Esophagus muscularis mucosa (tissue), 4 donors: ENCODE measurements at regions of chr16 and their contacts with region 1.

Region 1: DNA sequence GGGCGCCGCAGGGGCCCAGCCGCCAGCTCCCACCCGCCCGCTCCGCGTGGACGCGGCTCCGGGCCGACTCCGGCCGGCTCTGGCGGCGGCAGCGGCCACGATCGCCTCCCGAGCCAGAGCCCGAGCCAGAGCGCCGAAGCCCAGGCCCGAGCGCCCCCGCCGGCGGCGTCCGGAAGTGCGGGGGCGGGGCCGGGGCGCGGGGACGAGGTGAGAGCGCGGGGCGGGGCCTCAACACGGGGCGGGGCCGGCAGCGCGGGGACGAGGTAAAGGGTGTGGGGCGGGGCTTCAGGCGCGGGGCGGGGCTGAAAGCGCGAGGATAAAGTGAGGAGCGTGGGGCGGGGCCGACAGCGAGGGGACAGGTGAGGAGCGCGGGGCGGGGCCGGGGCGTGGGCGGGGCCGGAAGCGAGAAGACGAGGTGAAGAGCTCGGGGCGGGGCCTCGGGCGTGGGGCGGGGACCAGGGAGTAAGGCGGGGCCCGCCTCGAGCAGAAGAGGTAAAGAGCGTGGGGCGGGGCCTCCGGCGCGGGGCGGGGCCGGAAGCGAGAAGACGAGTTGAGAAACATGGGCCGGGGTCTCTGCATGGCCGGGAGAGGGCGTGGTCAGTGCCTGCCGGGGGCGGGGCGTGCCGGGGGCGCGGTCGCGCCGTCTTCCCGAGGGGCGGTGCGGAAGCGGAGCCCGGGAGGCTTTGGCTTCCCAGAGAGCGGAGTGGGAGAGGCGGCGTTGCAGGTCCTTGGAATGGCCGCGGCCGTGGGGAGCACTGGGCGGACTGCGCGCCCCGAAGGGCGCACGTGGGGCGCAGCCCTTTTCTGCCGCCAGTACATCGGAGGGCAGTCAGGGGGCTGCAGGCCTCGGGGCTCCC is at the start of gene AXIN1:
- DNase-seq: peak; percentile 100
- H3K4me3 ChIP-seq: peak within 1 kb of the TSS; percentile 78 to 94 (median 80)
- H3K27ac ChIP-seq: peak within 1 kb of the TSS; percentile 71 to 86 (median 81)
- H3K4me1 ChIP-seq: peaks cover 8 to 34% (median 27%) of the 10 kb centered on the region in 4 donors
- H3K27me3 ChIP-seq: no peaks in the 10 kb centered on the region
- CTCF ChIP-seq: peak; percentile 46 to 79 (median 63)
- EP300 ChIP-seq: no peak
- POLR2A ChIP-seq: no peak
- total RNA-seq, gene AXIN1: 24.1 to 56.2 (median 44.1) TPM

Region 2: GRCh38 chr16:228818-229730 is 123.7 kb before region 1 on chr16 and contains the start of gene LUC7L:
- intact Hi-C with region 1: loop called (anchors 5 kb)
- DNase-seq: peak; percentile 94
- H3K4me3 ChIP-seq: peak within 1 kb of the TSS; percentile 74 to 89 (median 83)
- H3K27ac ChIP-seq: peak within 1 kb of the TSS; percentile 97 to 99 (median 98)
- H3K4me1 ChIP-seq: peaks cover 14 to 35% (median 28%) of the 10 kb centered on the region in 4 donors
- H3K27me3 ChIP-seq: no peaks in the 10 kb centered on the region
- CTCF ChIP-seq: no peak
- EP300 ChIP-seq: no peak
- POLR2A ChIP-seq: peak; percentile 94
- total RNA-seq, gene LUC7L: 34.8 to 60.6 (median 50.2) TPM

Region 3: GRCh38 chr16:370443-370842 is 17.7 kb after region 1 on chr16 and contains the start of gene MRPL28:
- intact Hi-C with region 1: loop called (anchors 1 kb)
- DNase-seq: peak; percentile 98
- H3K4me3 ChIP-seq: peak within 1 kb of the TSS; percentile 56 to 62 (median 60)
- H3K27ac ChIP-seq: peak within 1 kb of the TSS; percentile 68 to 84 (median 73)
- H3K4me1 ChIP-seq: peaks cover 14 to 26% (median 23%) of the 10 kb centered on the region in 4 donors
- H3K27me3 ChIP-seq: no peaks in the 10 kb centered on the region
- CTCF ChIP-seq: no peak
- EP300 ChIP-seq: no peak
- POLR2A ChIP-seq: no peak
- total RNA-seq, gene MRPL28: 53.6 to 93.8 (median 69.5) TPM

Region 4: DNA sequence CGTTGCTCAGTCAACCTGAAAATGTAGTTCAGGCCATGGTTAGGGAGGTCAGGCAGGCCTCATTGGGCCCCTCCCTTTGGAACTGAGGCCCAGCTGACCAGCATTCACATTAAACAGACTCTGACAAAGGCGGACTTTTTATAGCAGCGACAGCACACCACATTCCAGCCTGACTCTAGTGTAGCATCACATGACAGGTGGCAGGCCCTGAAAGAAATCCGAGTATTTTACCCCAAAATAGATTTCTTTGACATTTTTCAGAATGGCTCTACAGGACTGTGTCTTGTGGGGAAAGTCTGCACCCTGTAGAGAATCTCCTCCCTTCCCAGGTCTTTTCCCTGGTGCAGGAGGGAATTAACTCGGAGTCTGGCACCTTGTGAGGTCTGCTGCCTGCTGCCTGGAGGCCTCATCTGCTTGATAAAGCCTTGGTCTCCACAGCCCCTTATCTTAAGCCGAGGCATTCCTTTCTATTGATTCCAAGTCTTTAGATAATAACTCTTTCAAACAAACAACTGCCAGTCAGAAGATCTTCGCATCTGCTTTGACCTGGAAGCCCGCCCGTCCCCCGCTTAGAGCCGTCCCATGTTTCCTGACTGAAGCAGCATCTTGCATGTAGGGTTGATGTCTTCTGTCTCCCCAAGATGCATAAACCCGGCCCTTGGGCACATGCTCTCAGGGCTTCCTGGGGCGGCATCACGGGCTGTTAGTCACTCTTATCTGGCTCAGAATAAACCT is 130.7 kb after region 1 on chr16:
- intact Hi-C with region 1: no loop called
- DNase-seq: no peak
- H3K4me3 ChIP-seq: no peak overlapping the region
- H3K27ac ChIP-seq: no peak overlapping the region
- H3K4me1 ChIP-seq: peaks cover 0 to 9% (median 0%) of the 10 kb centered on the region in 4 donors
- H3K27me3 ChIP-seq: no peaks in the 10 kb centered on the region
- CTCF ChIP-seq: no peak
- EP300 ChIP-seq: no peak
- POLR2A ChIP-seq: no peak